ENCODE measurements at regions of chr5 and their contacts with region 1.

Region 1: DNA sequence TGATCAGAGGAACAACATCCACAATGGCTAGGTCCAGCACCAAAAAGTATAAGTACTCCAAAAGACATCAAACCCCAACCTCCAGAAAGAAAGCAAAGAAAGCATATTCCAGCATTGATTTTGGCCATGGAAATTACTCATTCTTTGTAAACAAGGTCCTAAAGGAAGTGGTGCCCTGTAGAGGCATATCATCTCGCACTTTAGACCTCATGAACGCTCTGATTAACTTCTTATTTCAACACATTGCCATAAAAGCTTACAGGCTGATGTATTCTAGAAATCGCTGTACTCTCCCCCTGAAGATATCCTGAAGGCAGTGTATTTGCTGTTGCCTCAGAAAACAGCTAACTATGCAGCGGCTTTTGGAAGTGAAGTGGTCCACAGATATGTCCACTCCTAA is 82.7 kb upstream of the TNPO1 start:
- H3K4me3 ChIP-seq: no peak overlapping the region
- H3K27ac ChIP-seq: no peak overlapping the region
- H3K4me1 ChIP-seq: no peaks in the 10 kb centered on the region
- CTCF ChIP-seq: no peak

Region 2: DNA sequence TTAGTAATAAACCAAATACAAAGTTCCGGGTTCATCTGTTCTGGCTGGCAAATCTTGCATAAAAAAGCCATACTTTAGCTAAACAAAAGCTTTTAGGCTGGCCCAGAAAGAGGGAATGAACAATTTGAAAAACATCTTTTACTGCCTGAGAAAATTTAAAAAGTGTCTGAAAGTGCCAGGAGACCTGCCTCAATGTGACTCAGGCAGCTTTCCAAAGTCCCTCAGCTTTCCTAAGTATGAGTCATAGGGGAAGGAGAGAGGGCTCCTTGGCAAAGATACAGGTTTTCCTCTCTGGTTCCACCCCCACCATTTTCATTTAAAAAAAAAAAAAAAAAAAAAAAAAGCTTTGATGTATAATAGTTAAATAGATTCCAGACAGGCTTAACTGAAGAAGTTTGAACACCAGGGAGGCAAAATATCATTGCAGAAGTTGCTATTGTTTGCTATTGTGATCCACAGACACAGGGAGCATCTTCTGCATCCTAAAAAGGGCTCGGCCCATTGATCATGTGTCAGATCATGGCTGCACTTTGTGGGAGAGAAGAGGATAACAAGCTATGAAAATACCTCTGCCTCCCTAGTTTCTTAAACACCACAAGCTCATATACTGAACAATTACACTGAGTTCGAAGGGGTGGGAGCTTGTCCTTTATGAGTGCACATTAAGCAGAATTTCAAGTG is 485.3 kb before region 1 on chr5:
- CTCF ChIA-PET with region 1: no interaction called
- POLR2A ChIA-PET with region 1: interaction called, 11 read pairs
- H3K4me3 ChIP-seq: no peak overlapping the region
- H3K27ac ChIP-seq: peak overlapping the region; percentile 61
- H3K4me1 ChIP-seq: peaks cover 25% of the 10 kb centered on the region
- CTCF ChIP-seq: no peak

Measured in HEK293 (cell line).